Psoas muscle (tissue), 8 donors: ENCODE measurements at regions of chr16 and their contacts with region 1.

Region 1: GRCh38 chr16:27179500-27180072 is 23.7 kb upstream of the KDM8 start:
- DNase-seq: peak; percentile 84 to 91
- ATAC-seq: peak; percentile 92 to 95 (median 94)
- H3K4me3 ChIP-seq: no peak overlapping the region
- H3K27ac ChIP-seq: no peak overlapping the region
- H3K4me1 ChIP-seq: no peaks in the 10 kb centered on the region
- H3K27me3 ChIP-seq: no peaks in the 10 kb centered on the region
- CTCF ChIP-seq: peak; percentile 94

Region 2: DNA sequence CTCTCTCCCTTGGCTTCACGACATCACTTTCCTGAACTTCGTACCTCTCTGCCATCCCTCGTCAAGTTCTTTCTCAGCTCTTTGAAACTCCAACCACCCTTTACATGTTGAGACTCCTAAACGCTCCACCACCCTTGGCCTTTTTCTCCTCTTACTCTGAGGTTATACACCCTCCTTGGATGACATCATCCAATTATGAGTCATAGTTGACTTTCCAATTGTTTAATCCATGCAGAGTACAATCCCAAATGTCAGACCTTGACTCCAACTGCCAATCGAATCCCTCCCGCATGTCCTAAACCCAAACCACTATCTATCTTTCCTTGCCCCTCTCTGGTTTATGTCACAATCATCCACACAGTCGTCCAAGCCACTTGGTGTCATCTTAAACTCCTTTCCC is 131.3 kb before region 1 on chr16:
- intact Hi-C with region 1: no loop called
- DNase-seq: no peak
- ATAC-seq: no peak
- H3K4me3 ChIP-seq: no peak overlapping the region
- H3K27ac ChIP-seq: no peak overlapping the region
- H3K4me1 ChIP-seq: no peaks in the 10 kb centered on the region
- H3K27me3 ChIP-seq: peaks cover 0 to 6% (median 0%) of the 10 kb centered on the region in 3 donors
- CTCF ChIP-seq: no peak

Region 3: DNA sequence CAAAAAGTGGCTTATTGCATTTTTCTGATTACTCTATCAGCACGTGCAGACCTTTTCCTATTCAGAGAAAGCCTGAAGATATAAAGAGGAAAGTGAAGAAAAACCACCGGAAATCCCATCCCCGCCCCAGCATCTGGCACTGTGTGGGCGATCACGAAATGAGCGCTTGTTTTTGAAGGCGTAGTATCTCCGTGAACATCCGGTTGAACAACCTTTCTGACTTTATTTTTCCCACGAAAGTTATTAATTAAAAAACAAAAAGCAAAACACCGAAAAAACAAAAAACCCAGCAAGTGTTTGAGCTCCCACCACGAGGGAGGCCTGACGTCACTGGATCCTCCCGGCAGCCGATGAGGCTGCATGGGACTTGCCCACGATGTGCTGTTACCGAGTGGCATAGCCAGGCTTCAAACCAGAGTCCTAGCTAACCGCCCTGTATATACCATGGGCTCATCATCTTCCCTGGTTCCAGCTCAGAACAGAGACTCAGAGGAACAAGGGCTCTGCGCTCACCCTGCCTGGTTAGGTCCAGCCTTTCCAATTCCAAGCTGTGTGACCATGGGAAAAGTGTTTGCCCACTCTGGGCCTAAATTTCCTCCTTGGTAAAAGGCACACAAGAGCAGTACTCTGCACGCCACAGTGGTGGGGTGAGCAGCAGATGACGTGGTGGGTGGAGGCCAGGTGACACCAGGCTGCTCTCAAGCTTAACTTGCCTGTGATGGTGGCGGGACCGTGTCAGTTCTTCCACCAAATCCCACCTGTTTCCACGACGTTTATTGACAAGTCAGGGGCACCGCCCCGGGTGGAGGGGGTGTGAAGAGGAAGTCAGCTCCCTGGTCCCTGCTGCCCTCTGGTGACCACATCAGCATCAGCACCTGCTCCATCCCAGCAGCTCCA is 188.1 kb after region 1 on chr16:
- intact Hi-C with region 1: loop called (anchors 1 to 5 kb)
- DNase-seq: peak; percentile 78 to 85
- ATAC-seq: peak; percentile 68 to 81 (median 78)
- H3K4me3 ChIP-seq: peak overlapping the region; percentile 42
- H3K27ac ChIP-seq: peak overlapping the region; percentile 3
- H3K4me1 ChIP-seq: no peaks in the 10 kb centered on the region
- H3K27me3 ChIP-seq: peaks cover 0 to 4% (median 0%) of the 10 kb centered on the region in 3 donors
- CTCF ChIP-seq: peak; percentile 67

Region 4: DNA sequence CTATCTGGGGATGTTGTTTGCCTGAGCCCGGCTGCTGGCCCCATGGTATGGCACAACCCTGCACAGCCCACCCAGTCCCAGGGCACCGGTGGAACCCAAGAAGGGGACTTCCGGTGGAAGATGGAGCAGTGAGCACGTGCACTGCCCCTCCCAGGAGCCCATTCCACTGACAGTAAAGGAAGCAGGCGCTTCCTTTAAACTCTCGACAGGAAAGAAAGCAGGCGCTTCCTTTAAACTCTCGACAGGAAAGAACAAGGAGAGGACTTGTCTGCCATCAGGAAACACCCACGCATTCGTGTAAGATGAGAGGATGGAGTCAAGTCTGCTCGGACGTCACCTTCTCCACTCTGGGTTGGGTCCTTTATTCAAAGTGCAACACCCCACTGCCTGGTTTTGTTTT is 276.1 kb after region 1 on chr16:
- intact Hi-C with region 1: loop called (anchors 2 to 5 kb)
- DNase-seq: peak in 1 of 2 donors; percentile 30
- ATAC-seq: no peak
- H3K4me3 ChIP-seq: no peak overlapping the region
- H3K27ac ChIP-seq: no peak overlapping the region
- H3K4me1 ChIP-seq: peaks cover 10% of the 10 kb centered on the region
- H3K27me3 ChIP-seq: no peaks in the 10 kb centered on the region
- CTCF ChIP-seq: no peak